HepG2 (cell line): ENCODE measurements at regions of chr20 and their contacts with region 1.

Region 1: GRCh38 chr20:47854163-47854562 is 68.9 kb upstream of the SULF2 start:
- DNase-seq: no peak
- ATAC-seq: no peak
- H3K4me3 ChIP-seq: no peak overlapping the region
- H3K27ac ChIP-seq: no peak overlapping the region
- H3K4me1 ChIP-seq: peaks cover 15% of the 10 kb centered on the region
- H3K27me3 ChIP-seq: peaks cover 8 to 32% of the 10 kb centered on the region in 2 experiments; a peak in 4 of 5 replicates
- CTCF ChIP-seq: no peak
- EP300 ChIP-seq: no peak
- POLR2A ChIP-seq: no peak
- RAD21 ChIP-seq: no peak

Region 2: DNA sequence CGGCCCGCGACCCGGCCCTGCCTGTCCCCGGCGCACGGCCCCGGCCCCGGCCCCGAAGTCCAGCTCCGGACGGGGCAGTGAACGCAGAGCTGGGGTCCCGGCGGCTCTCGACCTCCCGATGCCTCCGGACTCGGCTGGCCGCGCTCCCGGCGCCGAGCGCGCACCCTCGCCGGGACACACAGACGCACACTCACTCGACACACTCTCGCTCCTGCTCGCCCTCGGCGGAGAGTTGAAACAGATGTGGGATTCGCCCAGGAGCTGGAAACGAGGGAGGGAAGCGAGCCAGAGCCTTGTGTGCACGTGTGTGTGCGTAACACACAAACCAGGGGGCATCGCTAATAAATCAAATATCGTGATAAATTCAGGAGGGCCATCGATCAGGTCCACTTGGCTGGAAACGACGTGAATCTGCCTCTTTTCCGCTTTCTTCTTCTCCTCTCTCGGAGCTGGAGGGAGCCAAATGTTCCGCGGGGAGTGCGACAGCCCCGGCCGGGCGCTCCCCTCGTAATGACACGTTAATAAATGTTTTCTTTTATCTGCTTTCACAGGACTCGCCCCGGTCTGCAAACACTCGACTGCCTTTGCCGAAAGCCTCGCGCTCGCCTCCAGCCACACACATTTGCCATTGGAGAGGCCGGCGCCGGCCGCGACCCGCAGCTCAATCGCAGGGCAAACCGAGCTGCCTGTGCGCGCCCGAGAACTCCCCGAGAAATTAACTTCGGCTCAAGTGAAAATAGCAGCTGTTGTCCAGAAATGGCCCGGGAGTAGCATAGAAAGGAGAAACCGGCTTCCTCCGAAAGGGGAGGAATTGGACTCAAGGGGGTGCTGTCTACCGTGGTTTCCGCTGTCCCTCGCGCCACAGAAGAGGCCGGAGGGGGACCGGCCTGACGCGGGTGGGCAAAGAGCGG is 68.1 kb before region 1 on chr20:
- CTCF ChIA-PET with region 1: no interaction called
- POLR2A ChIA-PET with region 1: no interaction called
- in situ Hi-C with region 1: no loop called
- intact Hi-C with region 1: no loop called
- DNase-seq: peak; percentile 82
- ATAC-seq: peak; percentile 82
- H3K4me3 ChIP-seq: peak overlapping the region; percentile 53 to 76 (median 72)
- H3K27ac ChIP-seq: no peak overlapping the region
- H3K4me1 ChIP-seq: peaks cover 42% of the 10 kb centered on the region
- H3K27me3 ChIP-seq: peaks cover 6 to 52% of the 10 kb centered on the region in 2 experiments; a peak in 4 of 5 replicates
- CTCF ChIP-seq: peak; percentile 95
- EP300 ChIP-seq: no peak
- POLR2A ChIP-seq: no peak
- RAD21 ChIP-seq: peak; percentile 94

Region 3: GRCh38 chr20:48188657-48189551 is 334.7 kb after region 1 on chr20:
- CTCF ChIA-PET with region 1: interaction called, 13 read pairs
- POLR2A ChIA-PET with region 1: no interaction called
- in situ Hi-C with region 1: no loop called
- intact Hi-C with region 1: loop called (anchors 1 kb)
- DNase-seq: peak; percentile 63
- ATAC-seq: peak; percentile 74
- H3K4me3 ChIP-seq: no peak overlapping the region
- H3K27ac ChIP-seq: no peak overlapping the region
- H3K4me1 ChIP-seq: peaks cover 13% of the 10 kb centered on the region
- H3K27me3 ChIP-seq: peaks cover 1 to 3% of the 10 kb centered on the region in 2 experiments; a peak in 1 of 5 replicates
- CTCF ChIP-seq: peak; percentile 81
- EP300 ChIP-seq: no peak
- POLR2A ChIP-seq: no peak
- RAD21 ChIP-seq: peak; percentile 80

Region 4: DNA sequence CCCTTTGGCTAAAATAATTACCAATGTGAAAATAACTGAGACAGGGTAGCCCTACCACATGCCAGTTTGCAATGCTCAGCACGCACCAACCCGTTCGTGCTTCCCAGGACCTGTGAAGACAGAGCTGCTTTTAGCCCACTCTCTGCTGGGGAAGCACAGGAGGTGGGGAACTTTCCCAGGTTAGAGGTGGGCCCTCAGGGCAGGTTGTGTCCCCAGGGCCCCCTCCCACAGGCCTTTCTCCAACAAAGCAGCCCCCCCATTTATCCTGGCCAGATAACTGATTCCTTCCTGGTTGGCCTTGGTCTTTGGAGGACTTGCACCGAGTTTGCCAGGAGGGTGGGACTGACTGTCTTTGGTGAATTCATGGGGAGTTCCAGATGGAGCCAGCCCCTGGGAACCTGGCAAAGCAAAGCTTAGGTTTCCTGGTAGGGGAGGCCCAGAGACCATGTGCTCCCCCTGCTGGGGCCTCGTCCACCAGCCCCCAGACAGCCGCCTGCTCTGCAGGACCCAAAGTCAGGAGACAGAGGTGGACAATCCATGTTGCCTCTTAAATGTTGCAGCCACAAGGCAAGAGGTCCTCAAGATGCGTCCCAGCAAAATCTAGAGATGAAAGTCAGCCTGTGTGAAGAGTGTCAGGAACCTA is 475.6 kb after region 1 on chr20:
- CTCF ChIA-PET with region 1: interaction called, 4 read pairs
- POLR2A ChIA-PET with region 1: no interaction called
- in situ Hi-C with region 1: no loop called
- intact Hi-C with region 1: loop called (anchors 2 kb)
- DNase-seq: peak; percentile 32
- ATAC-seq: peak; percentile 84
- H3K4me3 ChIP-seq: no peak overlapping the region
- H3K27ac ChIP-seq: no peak overlapping the region
- H3K4me1 ChIP-seq: peaks cover 5% of the 10 kb centered on the region; the same call in 1 of the 2 replicates
- H3K27me3 ChIP-seq: peaks cover 1 to 23% of the 10 kb centered on the region in 2 experiments; a peak in 4 of 5 replicates
- CTCF ChIP-seq: peak; percentile 80
- EP300 ChIP-seq: no peak
- POLR2A ChIP-seq: no peak
- RAD21 ChIP-seq: peak; percentile 87